Endothelial cell of umbilical vein (primary cell): ENCODE measurements at regions of chr3 and their contacts with region 1.

Region 1: GRCh38 chr3:50542177-50543034 is 25.1 kb downstream of the C3orf18 start:
- DNase-seq: peak; percentile 63
- H3K4me3 ChIP-seq: no peak overlapping the region
- H3K27ac ChIP-seq: no peak overlapping the region
- H3K4me1 ChIP-seq: no peaks in the 10 kb centered on the region
- H3K27me3 ChIP-seq: peaks cover 3 to 5% of the 10 kb centered on the region in 2 experiments
- CTCF ChIP-seq: peak; percentile 83 to 87
- POLR2A ChIP-seq: no peak

Region 2: GRCh38 chr3:50321336-50322114 is 220.9 kb before region 1 on chr3:
- CTCF ChIA-PET with region 1: interaction called, 10 read pairs
- POLR2A ChIA-PET with region 1: no interaction called
- dilution Hi-C with region 1: no loop called
- intact Hi-C with region 1: no loop called
- DNase-seq: peak; percentile 91
- H3K4me3 ChIP-seq: peak overlapping the region; percentile 65 to 89 (median 89)
- H3K27ac ChIP-seq: peak overlapping the region; percentile 99
- H3K4me1 ChIP-seq: peaks cover 63% of the 10 kb centered on the region
- H3K27me3 ChIP-seq: no peaks in the 10 kb centered on the region
- CTCF ChIP-seq: peak; percentile 41 to 82
- POLR2A ChIP-seq: no peak

Region 3: DNA sequence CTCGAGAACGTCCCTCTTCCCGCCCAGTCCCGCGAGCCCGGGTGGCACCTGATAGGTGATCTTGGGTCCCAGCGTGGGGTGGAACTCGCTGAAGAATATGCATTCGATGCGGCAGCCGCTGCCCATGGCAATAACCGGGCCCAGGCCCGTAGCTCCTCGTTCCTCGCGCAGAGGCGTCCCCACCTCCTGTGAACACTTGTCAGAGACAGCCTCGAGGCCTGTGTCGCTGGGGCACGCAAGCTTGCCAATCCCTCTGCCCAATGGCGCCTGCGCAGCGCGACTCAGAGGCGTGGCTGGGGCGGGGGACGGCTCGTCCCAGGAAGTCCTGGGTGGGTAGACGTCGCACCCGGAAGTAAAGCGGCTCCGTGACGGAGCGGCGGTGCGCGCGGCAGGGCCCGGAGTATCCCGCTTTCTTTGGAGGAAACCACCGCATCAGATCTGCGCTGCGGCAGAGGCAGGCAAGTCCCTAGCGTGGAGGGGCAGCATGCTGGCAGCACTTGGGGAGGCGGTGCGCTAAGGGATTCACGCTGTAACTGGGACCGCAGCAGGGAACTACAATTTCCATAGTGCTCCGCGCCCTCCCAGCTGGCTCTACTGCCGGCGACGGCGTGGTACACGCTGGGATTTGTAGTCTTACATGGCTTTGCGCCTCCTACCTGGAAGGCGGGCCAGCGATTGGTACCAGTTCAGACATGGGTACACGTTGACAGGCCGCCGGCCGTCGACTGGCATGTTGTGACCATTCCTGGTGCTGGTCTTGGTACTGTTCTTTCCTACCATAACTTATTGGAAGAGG is 191.7 kb before region 1 on chr3 and contains the starts of genes CYB561D2 and NPRL2:
- CTCF ChIA-PET with region 1: interaction called, 165 read pairs
- POLR2A ChIA-PET with region 1: interaction called, 3 read pairs
- dilution Hi-C with region 1: no loop called
- intact Hi-C with region 1: loop called (anchors 1 kb)
- DNase-seq: peak; percentile 95
- H3K4me3 ChIP-seq: peak within 1 kb of the TSS; percentile 19 to 77 (median 40)
- H3K27ac ChIP-seq: no peak within 1 kb of the TSS
- H3K4me1 ChIP-seq: peaks cover 16% of the 10 kb centered on the region
- H3K27me3 ChIP-seq: no peaks in the 10 kb centered on the region
- CTCF ChIP-seq: no peak
- POLR2A ChIP-seq: peak; percentile 80
- total RNA-seq, gene CYB561D2: 13.6 and 16.3 TPM in 2 replicates
- total RNA-seq, gene NPRL2: 13.4 and 14.5 TPM in 2 replicates

Region 4: GRCh38 chr3:50370594-50370993 is 171.8 kb before region 1 on chr3:
- CTCF ChIA-PET with region 1: interaction called, 77 read pairs
- POLR2A ChIA-PET with region 1: no interaction called
- dilution Hi-C with region 1: no loop called
- intact Hi-C with region 1: no loop called
- DNase-seq: peak; percentile 52
- H3K4me3 ChIP-seq: no peak overlapping the region
- H3K27ac ChIP-seq: no peak overlapping the region
- H3K4me1 ChIP-seq: no peaks in the 10 kb centered on the region
- H3K27me3 ChIP-seq: peaks cover 3 to 5% of the 10 kb centered on the region in 2 experiments
- CTCF ChIP-seq: peak; percentile 9 to 19
- POLR2A ChIP-seq: no peak

Region 5: DNA sequence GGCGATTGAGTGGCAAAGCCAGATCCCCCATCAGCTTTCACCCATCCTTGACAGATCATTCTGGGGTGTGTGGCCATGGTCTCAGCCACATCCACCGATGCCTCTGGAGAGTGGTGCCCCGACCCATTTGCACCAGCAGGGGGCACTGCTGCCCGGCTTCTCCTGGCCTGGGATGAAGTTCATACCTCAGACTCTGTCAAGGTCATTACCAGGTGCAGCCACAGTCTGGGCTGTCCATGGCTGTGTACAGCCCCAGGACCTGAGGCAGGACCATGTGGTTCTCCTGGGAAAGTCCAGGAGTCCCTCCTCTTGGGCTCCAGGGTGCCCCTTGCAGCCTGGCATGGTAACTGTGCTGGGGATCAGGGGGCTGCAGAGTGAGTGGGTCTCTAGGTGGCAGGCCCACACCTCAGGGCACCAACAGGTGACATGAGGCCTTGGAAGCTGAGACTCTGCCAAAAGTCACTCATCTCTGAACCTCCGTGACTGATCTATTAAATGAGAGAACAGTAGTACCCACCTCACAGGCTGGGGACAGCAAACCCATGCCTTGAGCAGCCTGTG is 106.2 kb before region 1 on chr3:
- CTCF ChIA-PET with region 1: interaction called, 67 read pairs
- POLR2A ChIA-PET with region 1: no interaction called
- dilution Hi-C with region 1: no loop called
- intact Hi-C with region 1: loop called (anchors 1 kb)
- DNase-seq: peak; percentile 42
- H3K4me3 ChIP-seq: no peak overlapping the region
- H3K27ac ChIP-seq: no peak overlapping the region
- H3K4me1 ChIP-seq: no peaks in the 10 kb centered on the region
- H3K27me3 ChIP-seq: no peaks in the 10 kb centered on the region
- CTCF ChIP-seq: peak; percentile 80 to 89
- POLR2A ChIP-seq: no peak

Region 6: DNA sequence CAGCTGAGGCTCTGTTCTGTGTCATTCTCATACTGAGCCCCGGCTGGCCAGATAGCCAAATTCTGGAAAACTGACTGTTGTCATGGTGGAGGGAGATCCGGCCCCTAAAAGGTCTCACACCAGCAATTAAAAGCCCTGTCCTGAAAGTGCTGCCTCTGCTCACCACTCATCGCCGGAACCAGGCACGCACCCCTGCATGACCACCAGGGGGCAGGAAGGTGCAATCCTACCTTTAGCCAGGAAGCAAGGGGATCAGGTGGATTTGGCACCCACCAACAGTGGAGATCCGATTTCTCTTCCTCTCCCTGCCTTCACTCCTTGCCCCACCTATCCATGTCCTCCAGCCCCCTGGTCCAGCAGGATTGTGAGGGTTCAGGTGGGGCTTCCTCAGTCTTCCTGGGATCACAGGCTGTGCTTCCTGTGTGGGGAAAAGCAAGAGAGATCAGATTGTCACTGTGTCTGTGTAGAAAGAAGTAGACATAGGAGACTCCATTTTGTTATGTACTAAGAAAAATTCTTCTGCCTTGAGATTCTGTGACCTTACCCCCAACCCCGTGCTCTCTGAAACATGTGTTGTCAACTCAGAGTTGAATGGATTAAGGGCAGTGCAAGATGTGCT is 22.8 kb before region 1 on chr3:
- CTCF ChIA-PET with region 1: interaction called, 15 read pairs
- POLR2A ChIA-PET with region 1: no interaction called
- dilution Hi-C with region 1: no loop called
- intact Hi-C with region 1: loop called (anchors 1 kb)
- DNase-seq: peak; percentile 27
- H3K4me3 ChIP-seq: no peak overlapping the region
- H3K27ac ChIP-seq: no peak overlapping the region
- H3K4me1 ChIP-seq: peaks cover 5% of the 10 kb centered on the region
- H3K27me3 ChIP-seq: peaks cover 0 to under 1% of the 10 kb centered on the region in 2 experiments
- CTCF ChIP-seq: peak; percentile 76 to 88
- POLR2A ChIP-seq: no peak